ENCODE measurements at regions of chr21 and their contacts with region 1.

Region 1: DNA sequence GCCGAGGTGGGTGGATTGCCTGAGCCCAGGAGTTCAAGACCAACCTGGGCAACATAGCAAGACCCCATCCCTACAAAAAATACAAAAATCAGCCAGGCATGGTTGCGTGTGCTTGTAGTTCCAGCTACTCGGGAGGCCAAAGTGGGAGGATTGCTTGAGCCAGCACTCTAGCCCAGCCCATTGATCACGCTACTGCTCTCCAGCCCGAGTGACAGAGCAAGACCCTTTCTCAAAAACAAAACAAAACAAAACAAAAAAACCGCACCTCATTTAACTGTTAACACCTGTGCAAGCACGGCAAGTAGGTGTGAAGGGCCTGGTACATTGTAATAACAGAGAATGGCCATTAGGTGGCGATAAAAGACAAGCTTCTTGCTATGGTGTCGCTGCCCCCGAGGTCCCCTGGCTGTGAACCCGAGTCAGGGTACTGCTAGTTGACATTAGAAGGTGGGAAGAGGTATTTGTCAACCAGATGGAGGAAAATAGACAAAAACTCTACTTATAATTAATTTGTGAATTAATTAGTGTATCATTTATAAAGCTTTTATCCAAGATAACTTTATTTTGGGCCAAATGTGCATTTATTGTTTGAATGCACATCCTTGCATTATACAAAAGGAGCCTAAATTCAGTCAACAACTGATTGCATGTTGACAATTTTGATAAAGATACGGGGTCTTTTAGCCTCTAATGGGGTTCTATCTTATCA is 66.5 kb downstream of the SH3BGR start:
- DNase-seq: peak; percentile 47
- H3K4me3 ChIP-seq: no peak overlapping the region
- H3K27ac ChIP-seq: no peak overlapping the region
- H3K4me1 ChIP-seq: no peaks in the 10 kb centered on the region
- H3K27me3 ChIP-seq: no peaks in the 10 kb centered on the region
- CTCF ChIP-seq: peak; percentile 72 to 76
- POLR2A ChIP-seq: no peak

Region 2: DNA sequence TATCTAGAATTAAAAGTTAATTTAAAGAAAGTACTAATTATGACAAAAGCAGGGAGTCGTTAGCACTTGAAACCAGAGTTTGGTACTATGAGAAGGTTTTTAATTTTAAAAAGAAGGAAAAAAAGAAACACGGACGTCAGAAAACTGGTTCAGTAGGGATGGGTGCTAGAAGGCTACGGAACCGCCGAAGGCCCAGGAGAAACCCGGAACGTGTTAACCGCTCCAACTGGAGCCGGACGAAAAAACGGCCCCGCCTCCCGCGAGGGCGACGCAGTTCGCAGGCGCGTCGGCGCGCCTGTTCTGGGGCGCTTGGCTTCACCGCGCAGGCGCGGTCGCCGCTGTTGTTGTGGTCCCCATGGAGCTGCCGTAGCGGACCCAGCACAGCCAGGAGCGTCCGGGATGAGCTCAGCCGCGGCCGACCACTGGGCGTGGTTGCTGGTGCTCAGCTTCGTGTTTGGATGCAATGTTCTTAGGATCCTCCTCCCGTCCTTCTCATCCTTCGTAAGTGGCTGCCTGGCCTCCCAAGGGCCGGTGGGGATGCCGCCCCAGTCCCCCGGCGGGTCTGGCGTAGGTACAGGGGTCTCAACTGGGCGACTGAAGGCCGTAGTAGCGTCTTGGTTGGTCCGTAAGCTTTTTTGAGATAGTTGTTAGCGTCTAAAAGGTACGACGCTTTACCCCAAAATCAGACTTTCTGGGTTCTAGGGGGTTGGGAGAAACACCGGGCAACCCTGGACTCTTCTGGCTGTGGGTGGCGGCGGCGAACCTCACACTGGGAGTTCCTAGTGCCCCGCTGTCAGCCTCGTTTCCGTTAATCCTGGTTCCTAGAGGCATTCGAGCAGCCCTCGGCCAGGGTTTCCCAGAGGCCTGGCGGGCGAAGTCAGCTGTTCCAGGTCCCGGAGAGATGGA is 138.1 kb before region 1 on chr21:
- CTCF ChIA-PET with region 1: no interaction called
- POLR2A ChIA-PET with region 1: no interaction called
- dilution Hi-C with region 1: no loop called
- intact Hi-C with region 1: no loop called
- DNase-seq: peak; percentile 95
- H3K4me3 ChIP-seq: peak overlapping the region; percentile 48 to 80 (median 78)
- H3K27ac ChIP-seq: peak overlapping the region; percentile 71
- H3K4me1 ChIP-seq: peaks cover 14% of the 10 kb centered on the region
- H3K27me3 ChIP-seq: peaks cover 3 to 5% of the 10 kb centered on the region in 2 experiments
- CTCF ChIP-seq: no peak
- POLR2A ChIP-seq: peak; percentile 86

Region 3: DNA sequence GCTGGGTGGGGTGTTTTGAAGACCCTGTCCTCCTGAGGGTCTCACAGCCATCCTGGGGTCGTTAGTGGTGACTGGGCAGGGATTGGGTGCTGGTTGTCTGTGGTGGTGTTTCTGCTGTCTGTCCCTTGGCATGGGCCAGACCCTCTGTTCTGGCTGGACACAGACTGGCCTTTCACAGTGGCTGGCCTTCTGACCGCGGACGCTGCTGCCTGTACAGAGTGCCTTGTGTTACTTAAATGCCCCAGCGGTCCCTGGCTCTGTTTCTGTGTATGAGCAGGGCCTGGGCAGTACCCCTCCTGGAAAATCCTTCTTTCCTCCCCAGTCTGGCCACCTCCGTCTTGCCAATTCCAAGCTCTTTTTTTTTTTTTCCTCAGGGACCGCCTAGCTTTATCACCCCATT is 15.7 kb before region 1 on chr21:
- CTCF ChIA-PET with region 1: interaction called, 12 read pairs
- POLR2A ChIA-PET with region 1: no interaction called
- dilution Hi-C with region 1: no loop called
- intact Hi-C with region 1: no loop called
- DNase-seq: no peak
- H3K4me3 ChIP-seq: no peak overlapping the region
- H3K27ac ChIP-seq: no peak overlapping the region
- H3K4me1 ChIP-seq: no peaks in the 10 kb centered on the region
- H3K27me3 ChIP-seq: no peaks in the 10 kb centered on the region
- CTCF ChIP-seq: no peak
- POLR2A ChIP-seq: no peak

Region 4: DNA sequence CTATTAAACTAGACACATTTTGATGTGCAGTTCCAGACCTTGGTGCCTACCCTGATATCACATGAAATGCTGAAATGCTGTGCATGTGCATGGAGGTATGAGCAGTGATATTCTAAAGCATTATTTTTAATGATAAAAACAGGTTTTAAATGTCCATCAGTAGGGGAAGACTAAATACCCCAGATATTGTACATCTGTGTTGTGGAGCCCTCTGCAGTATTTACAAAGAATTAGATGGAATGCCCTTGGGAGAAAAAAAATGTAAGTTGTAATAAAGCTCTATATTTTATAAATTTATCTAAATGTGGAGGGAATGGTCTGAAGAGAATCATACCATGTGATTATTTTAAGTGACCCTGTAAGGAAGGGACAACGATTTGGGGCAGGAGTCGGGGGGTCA is 187.6 kb after region 1 on chr21:
- CTCF ChIA-PET with region 1: interaction called, 12 read pairs
- POLR2A ChIA-PET with region 1: no interaction called
- dilution Hi-C with region 1: loop called (anchors 25 kb)
- intact Hi-C with region 1: no loop called
- DNase-seq: no peak
- H3K4me3 ChIP-seq: no peak overlapping the region
- H3K27ac ChIP-seq: no peak overlapping the region
- H3K4me1 ChIP-seq: no peaks in the 10 kb centered on the region
- H3K27me3 ChIP-seq: no peaks in the 10 kb centered on the region
- CTCF ChIP-seq: no peak
- POLR2A ChIP-seq: no peak

Region 5: GRCh38 chr21:39715804-39716397 is 197.6 kb after region 1 on chr21:
- CTCF ChIA-PET with region 1: interaction called, 30 read pairs
- POLR2A ChIA-PET with region 1: no interaction called
- dilution Hi-C with region 1: loop called (anchors 25 kb)
- intact Hi-C with region 1: loop called (anchors 1 kb)
- DNase-seq: peak; percentile 36
- H3K4me3 ChIP-seq: no peak overlapping the region
- H3K27ac ChIP-seq: no peak overlapping the region
- H3K4me1 ChIP-seq: no peaks in the 10 kb centered on the region
- H3K27me3 ChIP-seq: no peaks in the 10 kb centered on the region
- CTCF ChIP-seq: peak; percentile 45 to 46
- POLR2A ChIP-seq: no peak

Region 6: DNA sequence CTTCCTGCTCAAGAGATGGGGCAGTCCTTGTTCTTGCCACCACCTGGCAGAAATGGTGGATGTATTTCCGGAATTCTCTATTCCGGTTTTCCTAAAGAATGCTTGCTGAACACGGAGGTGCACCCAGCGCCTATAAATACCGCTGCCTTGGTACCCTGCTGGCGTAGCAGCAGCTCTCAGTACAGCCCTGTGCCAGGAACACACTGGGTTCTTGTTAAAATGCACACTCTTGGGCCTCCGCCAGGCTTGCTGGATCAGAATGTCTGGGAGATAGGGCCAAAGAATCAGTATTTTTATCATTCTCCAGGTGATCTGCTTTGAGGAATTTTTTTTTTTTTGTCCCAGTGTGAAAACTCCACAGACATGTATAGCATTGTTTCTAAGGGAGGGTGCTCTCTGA is 280.9 kb after region 1 on chr21:
- CTCF ChIA-PET with region 1: no interaction called
- POLR2A ChIA-PET with region 1: no interaction called
- dilution Hi-C with region 1: no loop called
- intact Hi-C with region 1: no loop called
- DNase-seq: no peak
- H3K4me3 ChIP-seq: no peak overlapping the region
- H3K27ac ChIP-seq: no peak overlapping the region
- H3K4me1 ChIP-seq: no peaks in the 10 kb centered on the region
- H3K27me3 ChIP-seq: no peaks in the 10 kb centered on the region
- CTCF ChIP-seq: no peak
- POLR2A ChIP-seq: no peak

Region 7: GRCh38 chr21:40120940-40121575 is 602.8 kb after region 1 on chr21:
- CTCF ChIA-PET with region 1: interaction called, 3 read pairs
- POLR2A ChIA-PET with region 1: no interaction called
- dilution Hi-C with region 1: no loop called
- intact Hi-C with region 1: loop called (anchors 2 kb)
- DNase-seq: no peak
- H3K4me3 ChIP-seq: no peak overlapping the region
- H3K27ac ChIP-seq: no peak overlapping the region
- H3K4me1 ChIP-seq: no peaks in the 10 kb centered on the region
- H3K27me3 ChIP-seq: no peaks in the 10 kb centered on the region
- CTCF ChIP-seq: peak; percentile 30 to 36
- POLR2A ChIP-seq: no peak

Region 8: GRCh38 chr21:40385892-40386599 is 867.8 kb after region 1 on chr21:
- CTCF ChIA-PET with region 1: no interaction called
- POLR2A ChIA-PET with region 1: no interaction called
- dilution Hi-C with region 1: no loop called
- intact Hi-C with region 1: loop called (anchors 5 kb)
- DNase-seq: no peak
- H3K4me3 ChIP-seq: no peak overlapping the region
- H3K27ac ChIP-seq: no peak overlapping the region
- H3K4me1 ChIP-seq: no peaks in the 10 kb centered on the region
- H3K27me3 ChIP-seq: no peaks in the 10 kb centered on the region
- CTCF ChIP-seq: peak; percentile 13 to 60
- POLR2A ChIP-seq: no peak

Region 9: DNA sequence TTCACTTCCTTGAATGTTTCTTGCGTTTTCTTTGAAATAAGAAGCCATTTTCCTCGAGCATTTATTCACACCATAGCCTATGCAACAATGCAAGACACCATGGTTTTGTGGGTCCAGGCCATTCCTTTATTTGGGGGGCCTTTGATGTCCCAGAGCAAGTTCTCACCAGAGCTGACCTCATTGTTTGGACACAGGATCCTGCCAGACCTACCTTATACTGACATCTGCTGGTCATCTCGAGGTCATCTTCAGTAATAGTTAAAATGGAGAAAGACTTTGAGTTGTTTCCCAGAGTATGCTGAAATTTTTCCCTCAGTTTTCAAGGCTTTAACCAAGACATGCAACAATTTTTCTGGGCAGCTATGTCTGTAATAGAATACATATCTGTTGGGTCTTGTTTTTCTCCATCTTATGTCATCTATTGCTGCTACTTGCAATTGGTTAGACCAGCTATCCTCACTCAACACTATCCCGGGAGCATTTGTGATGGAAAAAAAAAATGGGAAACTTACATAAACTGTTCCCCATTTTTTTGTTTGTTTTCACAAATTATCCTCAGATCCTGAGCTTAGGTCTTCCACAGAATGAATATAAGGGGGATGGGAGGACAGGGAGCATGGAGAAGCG is 1615.7 kb after region 1 on chr21:
- CTCF ChIA-PET with region 1: interaction called, 12 read pairs
- POLR2A ChIA-PET with region 1: no interaction called
- dilution Hi-C with region 1: no loop called
- intact Hi-C with region 1: no loop called
- DNase-seq: peak; percentile 39
- H3K4me3 ChIP-seq: no peak overlapping the region
- H3K27ac ChIP-seq: no peak overlapping the region
- H3K4me1 ChIP-seq: no peaks in the 10 kb centered on the region
- H3K27me3 ChIP-seq: peaks cover 0 to 2% of the 10 kb centered on the region in 2 experiments
- CTCF ChIP-seq: peak; percentile 12 to 40
- POLR2A ChIP-seq: no peak

Measured in endothelial cell of umbilical vein (primary cell).